IMR-90 (cell line): ENCODE measurements at regions of chr6 and their contacts with region 1.

Region 1: GRCh38 chr6:16483315-16483875 is 245.0 kb downstream of the GMPR start:
- DNase-seq: no peak
- ATAC-seq: no peak
- H3K4me3 ChIP-seq: no peak overlapping the region
- H3K27ac ChIP-seq: no peak overlapping the region
- H3K4me1 ChIP-seq: no peaks in the 10 kb centered on the region; the same call in 1 of the 2 replicates
- H3K27me3 ChIP-seq: no peaks in the 10 kb centered on the region
- CTCF ChIP-seq: no peak
- POLR2A ChIP-seq: no peak
- RAD21 ChIP-seq: no peak

Region 2: GRCh38 chr6:16446273-16446672 is 37.1 kb before region 1 on chr6:
- CTCF ChIA-PET with region 1: no interaction called
- POLR2A ChIA-PET with region 1: no interaction called
- dilution Hi-C with region 1: no loop called
- in situ Hi-C with region 1: no loop called
- intact Hi-C with region 1: no loop called
- DNase-seq: no peak
- ATAC-seq: no peak
- H3K4me3 ChIP-seq: no peak overlapping the region
- H3K27ac ChIP-seq: no peak overlapping the region
- H3K4me1 ChIP-seq: peaks cover 10% of the 10 kb centered on the region
- H3K27me3 ChIP-seq: no peaks in the 10 kb centered on the region
- CTCF ChIP-seq: no peak
- POLR2A ChIP-seq: no peak
- RAD21 ChIP-seq: no peak

Region 3: GRCh38 chr6:16494793-16495192 is 11.4 kb after region 1 on chr6:
- CTCF ChIA-PET with region 1: interaction called, 12 read pairs
- POLR2A ChIA-PET with region 1: no interaction called
- dilution Hi-C with region 1: no loop called
- in situ Hi-C with region 1: no loop called
- intact Hi-C with region 1: no loop called
- DNase-seq: peak; percentile 31
- ATAC-seq: no peak
- H3K4me3 ChIP-seq: no peak overlapping the region
- H3K27ac ChIP-seq: no peak overlapping the region
- H3K4me1 ChIP-seq: peaks cover 8% of the 10 kb centered on the region
- H3K27me3 ChIP-seq: no peaks in the 10 kb centered on the region
- CTCF ChIP-seq: no peak
- POLR2A ChIP-seq: no peak
- RAD21 ChIP-seq: no peak

Region 4: GRCh38 chr6:16523606-16524379 is 40.4 kb after region 1 on chr6:
- CTCF ChIA-PET with region 1: no interaction called
- POLR2A ChIA-PET with region 1: no interaction called
- dilution Hi-C with region 1: no loop called
- in situ Hi-C with region 1: no loop called
- intact Hi-C with region 1: no loop called
- DNase-seq: peak; percentile 93
- ATAC-seq: peak; percentile 87
- H3K4me3 ChIP-seq: no peak overlapping the region
- H3K27ac ChIP-seq: no peak overlapping the region
- H3K4me1 ChIP-seq: peaks cover 4% of the 10 kb centered on the region
- H3K27me3 ChIP-seq: no peaks in the 10 kb centered on the region
- CTCF ChIP-seq: no peak
- POLR2A ChIP-seq: no peak
- RAD21 ChIP-seq: peak; percentile 21; the same call in 1 of the 2 replicates